ENCODE measurements at regions of chr11 and their contacts with region 1.

Region 1: GRCh38 chr11:96272529-96273222 is 70.3 kb downstream of the MAML2 start:
- DNase-seq: peak in 1 of 2 experiments; percentile 9
- ATAC-seq: no peak
- H3K4me3 ChIP-seq: no peak overlapping the region
- H3K27ac ChIP-seq: no peak overlapping the region
- H3K4me1 ChIP-seq: no peaks in the 10 kb centered on the region
- CTCF ChIP-seq: no peak
- EP300 ChIP-seq: no peak
- POLR2A ChIP-seq: no peak
- RAD21 ChIP-seq: no peak

Region 2: GRCh38 chr11:95715777-95716241 is 556.9 kb before region 1 on chr11:
- CTCF ChIA-PET with region 1: no interaction called
- POLR2A ChIA-PET with region 1: no interaction called
- DNase-seq: no peak
- ATAC-seq: no peak
- H3K4me3 ChIP-seq: no peak overlapping the region
- H3K27ac ChIP-seq: no peak overlapping the region
- H3K4me1 ChIP-seq: no peaks in the 10 kb centered on the region
- CTCF ChIP-seq: no peak
- EP300 ChIP-seq: no peak
- POLR2A ChIP-seq: no peak
- RAD21 ChIP-seq: no peak

Region 3: GRCh38 chr11:96257972-96258934 is 14.4 kb before region 1 on chr11:
- CTCF ChIA-PET with region 1: no interaction called
- POLR2A ChIA-PET with region 1: no interaction called
- DNase-seq: no peak
- ATAC-seq: no peak
- H3K4me3 ChIP-seq: no peak overlapping the region
- H3K27ac ChIP-seq: peak overlapping the region; percentile 1 to 67; a peak in 1 of 6 replicates
- H3K4me1 ChIP-seq: peaks cover 41% of the 10 kb centered on the region
- CTCF ChIP-seq: no peak
- EP300 ChIP-seq: no peak
- POLR2A ChIP-seq: no peak
- RAD21 ChIP-seq: no peak

Region 4: DNA sequence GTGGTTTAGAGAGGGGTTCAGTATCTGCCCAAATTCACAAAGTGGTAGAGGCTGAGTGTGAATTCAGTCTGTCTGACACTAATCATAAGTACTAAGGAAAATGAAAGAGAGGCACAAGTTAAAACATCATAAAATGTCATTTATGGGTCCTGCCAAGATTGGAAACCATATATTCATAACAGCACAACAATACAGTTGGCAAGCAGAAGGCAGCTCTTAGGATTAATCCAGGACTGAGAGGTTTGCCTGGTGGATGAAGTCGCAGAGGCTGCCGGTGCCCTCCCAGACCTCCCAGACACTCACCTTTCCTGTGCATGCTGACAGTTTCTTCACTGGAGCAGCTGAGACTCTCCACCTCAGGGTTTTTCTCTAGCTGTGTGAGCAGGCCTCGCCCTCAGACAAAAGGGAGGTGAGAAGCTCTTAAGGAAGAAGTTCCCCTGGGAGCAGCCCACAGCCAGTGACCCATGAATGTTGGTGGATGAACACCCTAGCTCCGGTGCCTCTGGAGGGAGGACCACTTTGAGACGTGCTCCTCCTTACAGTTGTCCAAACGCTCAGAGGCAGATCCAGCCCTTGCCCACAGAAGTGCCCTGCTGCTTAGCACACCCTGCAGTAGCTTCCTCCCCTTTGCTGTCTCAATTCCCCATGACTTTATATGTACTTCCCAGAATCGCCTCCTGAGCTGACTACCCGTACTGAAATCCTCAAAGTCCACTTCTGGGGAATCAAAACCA is 26.6 kb after region 1 on chr11:
- CTCF ChIA-PET with region 1: interaction called, 4 read pairs
- POLR2A ChIA-PET with region 1: interaction called, 12 read pairs
- DNase-seq: no peak
- ATAC-seq: no peak
- H3K4me3 ChIP-seq: no peak overlapping the region
- H3K27ac ChIP-seq: peak overlapping the region in 1 of 2 experiments; percentile 13; a peak in 2 of 6 replicates
- H3K4me1 ChIP-seq: peaks cover 22% of the 10 kb centered on the region
- CTCF ChIP-seq: no peak
- EP300 ChIP-seq: no peak
- POLR2A ChIP-seq: no peak
- RAD21 ChIP-seq: no peak

Measured in A549 (cell line).